PC-9 (cell line): ENCODE measurements at regions of chr2 and their contacts with region 1.

Region 1: DNA sequence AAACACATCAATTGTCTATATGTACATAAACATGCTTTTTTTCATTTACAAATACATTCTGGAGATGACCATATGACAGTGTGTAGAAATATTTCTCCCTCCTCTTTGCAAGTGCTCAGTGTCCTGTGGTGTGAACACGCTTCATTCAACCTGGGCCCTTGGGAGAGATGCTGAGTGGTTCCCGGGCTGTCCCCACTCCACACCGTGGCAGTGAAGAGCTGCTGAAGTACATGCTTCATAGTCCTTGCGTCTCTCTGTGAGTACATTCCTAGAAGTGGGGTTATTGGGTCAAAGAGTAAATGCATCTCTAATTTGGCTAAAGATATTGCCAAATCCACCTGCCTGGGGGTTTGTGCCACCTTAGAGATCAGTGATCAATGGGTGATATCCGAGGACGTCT is 6.5 kb upstream of the GPR35 start:
- DNase-seq: no peak
- H3K4me3 ChIP-seq: no peak overlapping the region
- H3K27ac ChIP-seq: no peak overlapping the region
- H3K4me1 ChIP-seq: no peaks in the 10 kb centered on the region
- H3K27me3 ChIP-seq: peaks cover 30% of the 10 kb centered on the region
- CTCF ChIP-seq: no peak

Region 2: DNA sequence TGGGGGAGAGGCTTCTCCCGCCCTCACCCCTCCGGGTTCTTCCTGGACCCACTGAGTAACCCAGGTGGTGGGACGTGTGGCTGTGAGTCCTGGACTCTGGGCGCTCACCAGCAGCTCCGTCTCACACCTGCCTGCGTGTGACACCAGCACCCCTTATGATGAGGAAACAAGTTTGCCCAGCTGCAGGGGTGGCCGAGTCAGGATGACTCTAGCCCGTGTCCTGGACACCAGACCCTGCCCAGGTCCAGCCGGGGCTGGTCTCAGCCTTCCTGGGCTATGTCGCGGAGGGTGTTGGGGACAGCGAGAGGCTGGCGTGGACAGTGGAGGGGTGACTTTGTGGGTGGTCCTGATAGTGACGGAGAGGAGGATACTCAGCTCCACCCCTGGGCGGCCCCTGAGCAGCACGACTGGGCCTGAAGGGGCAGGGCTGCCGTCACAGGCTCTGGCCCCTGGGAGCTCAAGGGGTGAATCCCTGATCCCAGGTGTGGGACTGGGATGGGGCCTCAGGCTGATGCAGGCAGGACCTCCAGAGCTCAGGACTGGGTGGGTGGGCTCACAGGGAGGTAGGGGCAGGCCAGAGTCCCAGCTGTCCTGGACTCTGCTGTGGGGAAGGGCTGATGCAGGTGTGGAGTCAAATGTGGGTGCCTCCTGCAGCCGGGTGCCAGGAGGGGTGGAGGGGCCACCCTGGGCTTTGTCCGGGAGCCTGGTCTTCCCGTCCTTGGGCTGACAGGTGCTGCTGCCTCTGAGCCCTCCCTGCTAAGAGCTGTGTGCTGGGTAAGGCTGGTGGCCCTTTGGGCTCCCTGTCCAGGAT is 10.2 kb after region 1 on chr2:
- CTCF ChIA-PET with region 1: interaction called, 13 read pairs
- POLR2A ChIA-PET with region 1: no interaction called
- intact Hi-C with region 1: no loop called
- DNase-seq: no peak
- H3K4me3 ChIP-seq: no peak overlapping the region
- H3K27ac ChIP-seq: no peak overlapping the region
- H3K4me1 ChIP-seq: no peaks in the 10 kb centered on the region
- H3K27me3 ChIP-seq: peaks cover 44% of the 10 kb centered on the region
- CTCF ChIP-seq: no peak

Region 3: GRCh38 chr2:240663546-240664190 is 44.9 kb after region 1 on chr2:
- CTCF ChIA-PET with region 1: no interaction called
- POLR2A ChIA-PET with region 1: no interaction called
- intact Hi-C with region 1: no loop called
- DNase-seq: no peak
- H3K4me3 ChIP-seq: no peak overlapping the region
- H3K27ac ChIP-seq: no peak overlapping the region
- H3K4me1 ChIP-seq: no peaks in the 10 kb centered on the region
- H3K27me3 ChIP-seq: peaks cover 94% of the 10 kb centered on the region
- CTCF ChIP-seq: no peak